Activated CD4-positive, alpha-beta T cell treated with anti-CD3 and anti-CD28 coated beads, Interleukin-2, amount 10 ng/mL, durations not matched to agents 24 days and 14 days (primary cell): ENCODE measurements at regions of chr2 and their contacts with region 1.

Region 1: DNA sequence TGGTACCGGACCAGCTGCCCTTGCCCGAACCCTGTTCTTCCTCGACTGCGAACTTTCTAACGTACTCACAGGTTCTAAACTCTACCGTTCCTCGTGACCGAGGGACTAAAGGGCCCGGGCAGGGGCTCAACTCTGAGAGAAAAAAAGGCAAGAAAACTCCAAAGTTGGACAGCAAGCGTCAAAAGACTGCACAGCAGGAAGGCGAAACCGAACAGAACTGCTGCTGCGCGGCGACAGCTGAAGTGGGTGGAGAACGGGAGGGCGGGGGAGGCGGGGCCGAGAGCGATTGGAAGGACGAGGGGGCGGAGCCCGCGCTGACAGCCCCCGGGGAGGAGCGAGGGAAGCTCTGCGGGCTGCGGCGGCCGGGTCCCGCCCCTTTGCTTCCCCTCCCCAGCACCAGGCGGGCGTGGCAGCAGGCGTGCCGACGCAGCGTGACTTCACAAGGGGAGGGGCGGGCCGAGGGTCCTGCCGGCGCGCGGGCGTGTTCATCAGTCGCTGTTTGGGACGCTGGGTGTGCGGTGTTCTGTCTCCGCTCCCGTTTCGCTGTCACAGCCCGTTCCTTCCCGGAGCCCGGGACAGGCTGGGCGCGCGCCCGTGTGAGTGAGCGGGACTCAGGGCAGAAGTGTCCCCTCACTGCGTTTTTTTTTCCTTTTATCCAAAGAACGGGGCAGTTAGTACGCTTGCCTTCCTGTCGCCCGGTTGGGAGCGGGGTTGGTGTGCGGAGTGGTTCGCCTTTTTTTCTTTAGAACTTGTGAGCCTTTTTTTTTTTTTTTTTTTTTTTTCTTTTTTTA is at the start of gene NABP1:
- DNase-seq: peak; percentile 100
- H3K4me3 Mint-ChIP-seq: peak within 1 kb of the TSS; percentile 99
- H3K27ac Mint-ChIP-seq: peak within 1 kb of the TSS; percentile 100
- H3K4me1 Mint-ChIP-seq: peaks cover 47% of the 10 kb centered on the region
- H3K27me3 Mint-ChIP-seq: no peaks in the 10 kb centered on the region
- total RNA-seq, gene NABP1: 50.7 and 53.1 TPM in 2 replicates

Region 2: DNA sequence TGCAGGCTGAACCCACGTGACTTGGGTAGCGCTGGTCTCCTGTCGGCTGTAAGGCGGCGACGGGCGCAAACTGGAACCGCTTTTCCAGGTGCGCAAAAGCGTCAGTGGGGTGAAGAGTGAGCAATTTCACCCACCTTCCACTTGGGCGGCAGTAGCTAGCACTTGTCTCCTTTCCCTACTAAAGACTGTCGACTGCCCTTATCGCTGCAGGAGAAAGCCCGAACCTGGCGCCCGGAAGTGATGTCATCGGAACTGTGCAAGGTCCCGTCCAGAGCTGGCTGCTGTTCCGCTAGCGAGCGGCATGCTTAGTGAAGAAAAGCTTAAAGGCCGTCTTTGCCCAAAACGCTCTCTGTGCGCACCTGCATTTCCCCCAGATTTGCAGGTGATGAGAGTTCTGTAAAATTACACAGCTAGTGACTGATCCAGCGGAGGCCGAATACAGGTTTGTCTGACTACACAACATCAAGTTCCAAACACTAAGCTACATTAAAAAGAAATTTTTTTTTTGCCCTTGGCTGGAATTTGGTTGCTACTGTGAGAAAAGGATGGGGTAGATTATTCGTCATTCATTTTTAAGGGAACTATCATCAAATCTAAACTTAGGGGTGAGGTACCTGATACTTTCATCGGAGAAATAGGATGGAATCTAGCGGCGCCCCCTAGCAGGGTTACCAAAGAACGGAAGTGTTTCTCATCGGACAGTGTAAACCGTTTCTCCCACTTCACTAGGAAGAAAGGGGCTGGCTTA is 1915.1 kb before region 1 on chr2 and contains the start of gene OSGEPL1:
- intact Hi-C with region 1: loop called (anchors 10 kb)
- DNase-seq: peak; percentile 97
- H3K4me3 Mint-ChIP-seq: peak within 1 kb of the TSS; percentile 97
- H3K27ac Mint-ChIP-seq: peak within 1 kb of the TSS; percentile 98
- H3K4me1 Mint-ChIP-seq: peaks cover 12% of the 10 kb centered on the region
- H3K27me3 Mint-ChIP-seq: no peaks in the 10 kb centered on the region
- total RNA-seq, gene OSGEPL1: 11.1 and 12.2 TPM in 2 replicates

Region 3: GRCh38 chr2:191066197-191066918 is 611.5 kb before region 1 on chr2:
- intact Hi-C with region 1: loop called (anchors 10 kb)
- DNase-seq: peak; percentile 75
- H3K4me3 Mint-ChIP-seq: peak overlapping the region; percentile 88
- H3K27ac Mint-ChIP-seq: peak overlapping the region; percentile 92
- H3K4me1 Mint-ChIP-seq: peaks cover 76% of the 10 kb centered on the region
- H3K27me3 Mint-ChIP-seq: no peaks in the 10 kb centered on the region

Region 4: DNA sequence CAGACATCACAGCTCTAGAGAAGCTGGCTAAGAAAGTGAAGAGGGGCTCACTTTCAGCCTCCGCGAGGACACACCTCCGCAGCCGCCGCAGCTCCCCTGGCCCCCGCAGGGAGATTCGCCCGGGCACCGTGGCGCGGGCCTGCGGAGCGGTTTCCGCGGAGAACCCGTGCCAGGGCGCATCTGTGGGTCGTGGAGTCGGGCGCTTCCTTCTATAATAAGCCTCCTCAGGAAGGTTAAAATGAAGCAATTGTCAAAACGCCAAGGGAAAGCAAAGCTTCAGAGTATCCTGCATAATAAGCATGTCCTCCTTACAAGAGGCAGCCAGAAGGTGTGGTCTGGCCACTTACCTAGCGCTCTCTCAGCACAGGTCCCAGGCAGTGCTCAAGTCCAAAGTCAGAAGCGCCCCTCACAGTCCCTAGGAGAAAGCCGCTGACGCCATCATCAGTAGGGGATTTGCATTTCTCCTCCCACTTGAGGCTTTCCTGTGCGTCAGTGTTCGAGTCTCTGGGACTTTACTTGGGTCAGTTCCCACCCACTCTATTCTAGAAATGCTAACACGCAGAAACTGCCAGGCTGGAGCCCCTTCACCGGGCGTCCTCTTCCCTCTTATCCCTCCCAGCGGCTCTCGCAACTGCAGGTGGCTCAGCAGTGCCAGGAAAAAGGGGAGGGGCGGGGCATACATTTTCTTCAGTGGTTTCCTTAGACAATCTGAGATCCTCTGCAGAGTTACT is 527.1 kb before region 1 on chr2 and contains the start of gene STAT4:
- intact Hi-C with region 1: loop called (anchors 2 kb)
- DNase-seq: peak; percentile 94
- H3K4me3 Mint-ChIP-seq: peak within 1 kb of the TSS; percentile 91
- H3K27ac Mint-ChIP-seq: peak within 1 kb of the TSS; percentile 92
- H3K4me1 Mint-ChIP-seq: peaks cover 65% of the 10 kb centered on the region
- H3K27me3 Mint-ChIP-seq: no peaks in the 10 kb centered on the region
- total RNA-seq, gene STAT4: 47.9 and 50.8 TPM in 2 replicates

Region 5: GRCh38 chr2:191566344-191566743 is 111.5 kb before region 1 on chr2:
- intact Hi-C with region 1: loop called (anchors 5 kb)
- DNase-seq: peak; percentile 89
- H3K4me3 Mint-ChIP-seq: no peak overlapping the region
- H3K27ac Mint-ChIP-seq: no peak overlapping the region
- H3K4me1 Mint-ChIP-seq: peaks cover 29% of the 10 kb centered on the region
- H3K27me3 Mint-ChIP-seq: peaks cover 59% of the 10 kb centered on the region

Region 6: GRCh38 chr2:191637182-191638078 is 40.4 kb before region 1 on chr2:
- intact Hi-C with region 1: loop called (anchors 1 kb)
- DNase-seq: peak; percentile 81
- H3K4me3 Mint-ChIP-seq: peak overlapping the region; percentile 78
- H3K27ac Mint-ChIP-seq: peak overlapping the region; percentile 90
- H3K4me1 Mint-ChIP-seq: peaks cover 61% of the 10 kb centered on the region
- H3K27me3 Mint-ChIP-seq: peaks cover 10% of the 10 kb centered on the region

Region 7: GRCh38 chr2:191691016-191691735 is 13.3 kb after region 1 on chr2:
- intact Hi-C with region 1: loop called (anchors 1 kb)
- DNase-seq: peak; percentile 88
- H3K4me3 Mint-ChIP-seq: no peak overlapping the region
- H3K27ac Mint-ChIP-seq: no peak overlapping the region
- H3K4me1 Mint-ChIP-seq: peaks cover 31% of the 10 kb centered on the region
- H3K27me3 Mint-ChIP-seq: no peaks in the 10 kb centered on the region

Region 8: DNA sequence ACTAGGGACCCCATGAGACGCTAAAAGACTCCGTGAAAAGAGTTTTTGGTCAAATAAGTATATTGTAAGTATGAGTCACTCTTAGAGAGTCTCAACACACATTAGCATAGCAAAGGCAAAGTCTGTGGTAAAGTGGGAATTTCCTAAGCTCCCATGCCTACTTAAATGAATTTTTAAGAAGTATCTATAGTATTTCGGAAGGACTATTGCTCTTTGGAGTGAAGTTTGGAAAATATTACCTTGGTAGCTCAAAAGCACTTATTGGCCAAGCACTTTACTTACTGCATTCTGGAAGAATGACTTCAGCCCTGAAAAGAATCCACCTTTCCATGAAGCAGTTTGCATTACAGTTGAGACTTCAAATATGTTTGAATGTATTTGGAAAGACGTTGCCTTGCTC is 112.0 kb after region 1 on chr2:
- intact Hi-C with region 1: no loop called
- DNase-seq: no peak
- H3K4me3 Mint-ChIP-seq: no peak overlapping the region
- H3K27ac Mint-ChIP-seq: no peak overlapping the region
- H3K4me1 Mint-ChIP-seq: no peaks in the 10 kb centered on the region
- H3K27me3 Mint-ChIP-seq: peaks cover 33% of the 10 kb centered on the region